ENCODE measurements at regions of chr7 and their contacts with region 1.

Region 1: DNA sequence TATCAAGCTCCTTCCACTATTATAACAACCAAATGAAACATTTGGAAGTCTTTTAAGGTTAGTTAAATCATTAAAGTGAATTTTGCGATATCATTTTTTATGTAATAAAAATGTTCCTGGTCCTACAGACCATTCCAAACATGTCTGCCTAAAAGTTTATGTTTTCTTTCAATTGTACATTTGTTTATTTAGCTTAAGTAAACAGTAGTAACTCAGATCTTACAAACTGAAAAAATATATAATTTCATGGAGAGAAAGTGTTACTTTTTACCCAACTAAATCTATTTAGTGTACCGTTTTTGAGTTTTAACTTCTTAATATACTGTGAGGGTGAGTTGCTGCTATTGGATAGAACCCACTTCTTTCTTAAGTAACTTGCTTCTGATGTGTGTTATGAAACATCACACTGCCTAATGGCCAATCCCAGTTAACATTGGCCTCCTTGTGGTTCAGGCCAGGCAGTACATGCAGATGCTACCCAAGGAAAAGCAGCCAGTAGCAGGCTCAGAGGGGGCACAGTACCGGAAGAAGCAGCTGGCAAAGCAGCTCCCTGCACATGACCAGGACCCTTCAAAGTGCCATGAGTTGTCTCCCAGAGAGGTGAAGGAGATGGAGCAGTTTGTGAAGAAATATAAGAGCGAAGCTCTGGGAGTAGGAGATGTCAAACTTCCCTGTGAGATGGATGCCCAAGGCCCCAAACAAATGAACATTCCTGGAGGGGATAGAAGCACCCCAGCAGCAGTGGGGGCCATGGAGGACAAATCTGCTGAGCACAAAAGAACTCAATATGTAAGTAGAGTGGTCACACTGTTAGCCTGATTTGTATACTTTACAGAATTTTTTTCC is 39.6 kb downstream of the TES start:
- DNase-seq: peak; percentile 42 to 74 (median 70)
- H3K4me3 ChIP-seq: no peak overlapping the region
- H3K27ac ChIP-seq: no peak overlapping the region
- H3K4me1 ChIP-seq: no peaks in the 10 kb centered on the region
- H3K27me3 ChIP-seq: no peaks in the 10 kb centered on the region

Region 2: GRCh38 chr7:115748131-115748738 is 501.7 kb before region 1 on chr7:
- CTCF ChIA-PET with region 1: no interaction called
- POLR2A ChIA-PET with region 1: no interaction called
- DNase-seq: no peak
- H3K4me3 ChIP-seq: no peak overlapping the region
- H3K27ac ChIP-seq: no peak overlapping the region
- H3K4me1 ChIP-seq: no peaks in the 10 kb centered on the region
- H3K27me3 ChIP-seq: no peaks in the 10 kb centered on the region

Region 3: GRCh38 chr7:116173051-116174028 is 76.6 kb before region 1 on chr7:
- CTCF ChIA-PET with region 1: interaction called, 53 read pairs
- POLR2A ChIA-PET with region 1: no interaction called
- DNase-seq: peak; percentile 64 to 87 (median 78)
- H3K4me3 ChIP-seq: no peak overlapping the region
- H3K27ac ChIP-seq: no peak overlapping the region
- H3K4me1 ChIP-seq: peaks cover 0 to 2% (median 0%) of the 10 kb centered on the region in 4 experiments
- H3K27me3 ChIP-seq: no peaks in the 10 kb centered on the region